ENCODE measurements at regions of chr13 and their contacts with region 1.

Region 1: DNA sequence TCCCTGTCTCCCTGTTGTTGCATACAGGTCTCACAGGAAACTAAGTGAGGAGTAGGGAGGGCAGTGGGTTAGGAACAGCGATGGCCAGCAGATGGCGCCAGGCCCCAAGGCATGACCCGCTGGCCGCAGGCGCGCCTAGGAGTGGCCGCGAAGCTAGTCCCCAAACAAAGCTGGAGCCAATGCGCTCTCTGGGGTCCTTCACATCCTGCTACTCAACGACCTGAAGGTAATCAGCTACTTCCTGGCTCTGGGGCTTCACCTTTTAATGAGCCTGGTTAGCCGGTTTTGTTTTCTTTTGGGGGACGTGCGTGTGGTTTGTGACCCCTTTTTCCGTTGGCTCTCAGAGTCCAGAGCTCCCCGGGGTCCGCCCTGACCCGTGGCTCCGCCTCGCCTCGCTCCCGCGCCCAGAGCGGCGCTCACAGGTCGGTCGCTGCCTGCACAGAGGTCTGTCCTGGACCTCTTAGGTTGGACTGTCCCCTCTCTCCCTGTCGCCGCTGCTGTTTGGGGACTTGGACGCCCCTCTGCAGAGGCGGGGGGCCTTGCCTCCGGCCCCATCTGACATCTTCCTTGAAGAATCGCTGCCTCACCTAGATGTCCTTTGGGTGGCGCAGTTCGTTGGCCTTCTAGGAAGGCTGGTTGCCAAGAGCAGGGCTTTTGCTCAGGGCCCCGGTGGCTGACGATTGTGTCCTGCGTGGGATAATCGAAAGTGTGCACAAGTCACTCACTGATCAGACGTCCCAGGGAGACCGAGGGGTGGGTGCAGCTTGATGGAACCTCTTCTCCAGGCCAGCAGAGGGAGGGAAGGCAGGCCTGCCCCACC is 62.1 kb upstream of the GTF3A start:
- DNase-seq: peak; percentile 69
- ATAC-seq: peak; percentile 96
- H3K4me3 ChIP-seq: peak overlapping the region; percentile 40 to 55
- H3K27ac ChIP-seq: no peak overlapping the region
- H3K4me1 ChIP-seq: peaks cover 7 to 11% of the 10 kb centered on the region in 2 experiments
- H3K27me3 ChIP-seq: no peaks in the 10 kb centered on the region
- CTCF ChIP-seq: peak; percentile 80 to 91 (median 89)
- POLR2A ChIP-seq: no peak
- RAD21 ChIP-seq: peak; percentile 93

Region 2: GRCh38 chr13:26946684-26947343 is 415.5 kb before region 1 on chr13:
- CTCF ChIA-PET with region 1: interaction called, 60 read pairs
- POLR2A ChIA-PET with region 1: interaction called, 3 read pairs
- RAD21 ChIA-PET with region 1: interaction called, 7 to 12 read pairs
- intact Hi-C with region 1: loop called (anchors 1 kb)
- DNase-seq: peak; percentile 44
- ATAC-seq: peak; percentile 96
- H3K4me3 ChIP-seq: no peak overlapping the region
- H3K27ac ChIP-seq: no peak overlapping the region
- H3K4me1 ChIP-seq: peaks cover 0 to 2% of the 10 kb centered on the region in 2 experiments; a peak in 1 of 4 replicates
- H3K27me3 ChIP-seq: peaks cover 4% of the 10 kb centered on the region; the same call in 1 of the 2 replicates
- CTCF ChIP-seq: peak; percentile 62 to 81 (median 74)
- POLR2A ChIP-seq: no peak
- RAD21 ChIP-seq: peak; percentile 86

Region 3: DNA sequence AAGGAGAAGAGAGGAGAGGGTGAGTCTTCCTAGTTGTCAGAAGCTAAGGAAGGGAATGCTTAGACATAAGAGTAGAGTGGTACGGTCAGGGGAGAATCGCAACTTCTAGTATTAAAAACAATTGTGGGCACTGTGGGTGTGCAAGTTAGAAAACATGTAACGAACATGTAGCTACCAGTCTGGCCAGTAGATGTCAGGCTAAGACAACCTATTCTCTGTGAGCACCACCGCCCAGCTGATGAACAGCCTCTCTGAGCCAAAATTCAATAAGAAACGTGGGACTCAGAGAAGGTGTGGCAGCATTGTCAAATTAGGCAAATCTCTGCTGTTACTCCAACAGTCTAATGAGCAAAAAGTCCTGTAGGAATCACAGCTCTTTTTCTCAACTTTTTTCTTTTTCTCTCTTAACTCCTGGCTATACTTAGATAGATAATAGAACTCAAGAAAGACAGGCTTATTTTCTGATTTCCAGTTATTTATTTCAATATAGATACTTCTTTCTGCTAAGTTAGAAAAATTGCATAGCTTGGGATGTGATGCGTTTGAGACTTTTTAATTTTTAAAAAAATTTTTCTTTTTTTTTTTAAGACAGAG is 376.9 kb before region 1 on chr13:
- CTCF ChIA-PET with region 1: interaction called, 106 read pairs
- POLR2A ChIA-PET with region 1: interaction called, 5 read pairs
- RAD21 ChIA-PET with region 1: interaction called, 8 to 13 read pairs
- intact Hi-C with region 1: loop called (anchors 1 kb)
- DNase-seq: peak; percentile 76
- ATAC-seq: peak; percentile 94
- H3K4me3 ChIP-seq: no peak overlapping the region
- H3K27ac ChIP-seq: no peak overlapping the region
- H3K4me1 ChIP-seq: peaks cover 0 to 3% of the 10 kb centered on the region in 2 experiments; a peak in 1 of 4 replicates
- H3K27me3 ChIP-seq: no peaks in the 10 kb centered on the region
- CTCF ChIP-seq: peak; percentile 68 to 87 (median 86)
- POLR2A ChIP-seq: no peak
- RAD21 ChIP-seq: peak; percentile 97

Region 4: DNA sequence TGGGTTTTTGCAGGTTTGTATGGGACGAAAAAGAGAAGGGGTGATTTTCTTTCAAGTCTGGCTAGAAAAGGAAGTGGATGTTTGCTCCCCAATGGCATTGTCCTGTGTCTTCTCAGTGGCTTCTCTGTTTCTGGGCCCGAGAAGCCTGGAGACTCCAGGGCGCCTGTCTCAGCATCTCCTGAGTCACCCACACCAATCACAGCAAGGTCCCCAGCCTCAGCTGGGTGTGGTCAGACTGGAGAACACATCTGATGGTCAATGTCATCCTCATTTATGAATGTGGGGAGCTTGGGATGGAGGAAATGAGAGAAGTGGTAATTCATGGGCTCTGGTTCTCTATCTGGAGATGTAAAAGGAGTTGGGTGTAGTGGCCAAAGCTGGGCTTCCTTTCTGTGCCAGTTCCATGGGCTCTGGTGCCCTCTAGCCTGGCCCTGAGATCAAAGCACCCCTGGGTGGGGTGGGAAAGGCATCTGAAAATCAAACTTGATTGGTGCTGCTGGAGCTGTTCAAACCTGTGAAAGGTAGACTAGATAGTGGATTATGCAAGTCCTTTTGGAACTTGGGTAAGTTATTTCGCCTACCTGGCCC is 78.3 kb before region 1 on chr13:
- CTCF ChIA-PET with region 1: interaction called, 3 read pairs
- POLR2A ChIA-PET with region 1: no interaction called
- RAD21 ChIA-PET with region 1: interaction called in 1 of 2 experiments, 3 read pairs
- intact Hi-C with region 1: loop called (anchors 2 kb)
- DNase-seq: peak; percentile 15
- ATAC-seq: peak; percentile 85
- H3K4me3 ChIP-seq: no peak overlapping the region
- H3K27ac ChIP-seq: no peak overlapping the region
- H3K4me1 ChIP-seq: peaks cover 0 to 7% of the 10 kb centered on the region in 2 experiments; a peak in 1 of 4 replicates
- H3K27me3 ChIP-seq: no peaks in the 10 kb centered on the region
- CTCF ChIP-seq: peak; percentile 45 to 47 (median 46); a peak in 5 of 6 replicates
- POLR2A ChIP-seq: no peak
- RAD21 ChIP-seq: peak; percentile 80

Region 5: GRCh38 chr13:27533155-27533643 is 170.9 kb after region 1 on chr13:
- CTCF ChIA-PET with region 1: interaction called, 10 read pairs
- POLR2A ChIA-PET with region 1: no interaction called
- RAD21 ChIA-PET with region 1: no interaction called
- intact Hi-C with region 1: no loop called
- DNase-seq: peak; percentile 62
- ATAC-seq: peak; percentile 98
- H3K4me3 ChIP-seq: peak overlapping the region; percentile 27 to 31; a peak in 3 of 4 replicates
- H3K27ac ChIP-seq: no peak overlapping the region
- H3K4me1 ChIP-seq: peaks cover 0 to 7% of the 10 kb centered on the region in 2 experiments; a peak in 1 of 4 replicates
- H3K27me3 ChIP-seq: no peaks in the 10 kb centered on the region
- CTCF ChIP-seq: peak; percentile 96 to 97 (median 97)
- POLR2A ChIP-seq: no peak
- RAD21 ChIP-seq: peak; percentile 75

Region 6: GRCh38 chr13:27980280-27980998 is 618.2 kb after region 1 on chr13:
- CTCF ChIA-PET with region 1: interaction called, 94 read pairs
- POLR2A ChIA-PET with region 1: no interaction called
- RAD21 ChIA-PET with region 1: interaction called, 6 to 10 read pairs
- intact Hi-C with region 1: loop called (anchors 1 kb)
- DNase-seq: no peak
- ATAC-seq: no peak
- H3K4me3 ChIP-seq: no peak overlapping the region
- H3K27ac ChIP-seq: no peak overlapping the region
- H3K4me1 ChIP-seq: no peaks in the 10 kb centered on the region
- H3K27me3 ChIP-seq: no peaks in the 10 kb centered on the region
- CTCF ChIP-seq: no peak
- POLR2A ChIP-seq: no peak
- RAD21 ChIP-seq: no peak